Esophagus muscularis mucosa (tissue), 4 donors: ENCODE measurements at regions of chr1 and their contacts with region 1.

Region 1: DNA sequence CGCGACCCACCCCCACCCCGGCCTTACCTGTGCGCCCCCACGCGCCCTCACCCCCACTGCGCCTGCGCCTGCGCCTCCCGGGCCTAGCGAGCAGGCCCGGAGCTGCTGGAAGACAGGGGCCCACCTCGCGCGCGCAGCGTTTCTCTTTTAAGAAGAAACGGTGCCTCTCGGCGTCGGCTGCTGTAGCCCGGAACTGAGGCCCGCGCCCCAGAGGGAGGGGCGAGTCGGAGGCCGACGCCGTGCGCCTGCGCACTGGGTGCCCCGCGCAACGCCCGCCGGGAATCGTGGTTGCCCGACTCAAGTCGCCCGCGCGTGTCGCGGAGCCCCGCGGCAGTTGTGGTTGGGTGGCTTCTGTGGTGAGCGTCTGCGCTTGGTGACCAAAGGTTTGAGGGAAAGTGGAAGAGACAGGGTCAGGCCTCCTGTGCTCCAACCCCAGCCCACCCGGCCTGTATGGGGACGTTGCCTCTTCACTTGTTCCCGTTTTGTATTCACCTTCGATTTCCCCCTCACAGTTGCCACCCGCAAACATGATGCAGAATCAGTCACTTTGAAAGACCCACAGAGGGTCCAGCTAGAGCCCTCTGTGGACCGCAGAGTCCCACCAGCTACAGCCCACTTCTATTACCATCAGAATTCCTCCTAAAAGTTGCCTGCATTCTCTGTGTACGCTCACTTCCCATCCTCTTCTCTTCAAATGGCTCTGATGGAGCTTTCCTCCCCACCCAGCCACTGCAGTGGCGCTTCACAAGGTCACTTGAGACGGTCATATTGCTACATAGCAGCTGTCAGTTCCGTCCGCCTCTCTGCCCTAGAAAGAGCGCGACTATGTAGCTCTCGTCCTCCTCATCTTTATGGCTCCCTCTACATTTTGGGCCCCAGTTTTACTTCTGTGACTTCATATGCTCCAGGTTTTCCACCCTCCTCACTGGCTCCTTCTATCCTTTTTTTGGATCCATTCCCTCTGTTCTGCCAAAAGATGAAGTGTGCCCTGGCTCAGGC is at the start of gene ZNF692:
- DNase-seq: peak; percentile 99
- H3K4me3 ChIP-seq: peak within 1 kb of the TSS; percentile 61 to 71 (median 64)
- H3K27ac ChIP-seq: peak within 1 kb of the TSS; percentile 87 to 95 (median 94)
- H3K4me1 ChIP-seq: peaks cover 37 to 44% (median 43%) of the 10 kb centered on the region in 4 donors
- H3K27me3 ChIP-seq: no peaks in the 10 kb centered on the region
- CTCF ChIP-seq: peak in 1 of 3 experiments; percentile 5
- EP300 ChIP-seq: no peak
- POLR2A ChIP-seq: peak; percentile 83
- total RNA-seq, gene ZNF692: 19.4 to 37.3 (median 30.5) TPM

Region 2: GRCh38 chr1:248807067-248807737 is 52.0 kb before region 1 on chr1:
- intact Hi-C with region 1: no loop called
- DNase-seq: no peak
- H3K4me3 ChIP-seq: no peak overlapping the region
- H3K27ac ChIP-seq: no peak overlapping the region
- H3K4me1 ChIP-seq: peaks cover 11 to 35% (median 26%) of the 10 kb centered on the region in 4 donors
- H3K27me3 ChIP-seq: peaks cover 0 to 5% (median 0%) of the 10 kb centered on the region in 4 donors
- CTCF ChIP-seq: peak; percentile 58 to 82 (median 64)
- EP300 ChIP-seq: no peak
- POLR2A ChIP-seq: no peak

Region 3: DNA sequence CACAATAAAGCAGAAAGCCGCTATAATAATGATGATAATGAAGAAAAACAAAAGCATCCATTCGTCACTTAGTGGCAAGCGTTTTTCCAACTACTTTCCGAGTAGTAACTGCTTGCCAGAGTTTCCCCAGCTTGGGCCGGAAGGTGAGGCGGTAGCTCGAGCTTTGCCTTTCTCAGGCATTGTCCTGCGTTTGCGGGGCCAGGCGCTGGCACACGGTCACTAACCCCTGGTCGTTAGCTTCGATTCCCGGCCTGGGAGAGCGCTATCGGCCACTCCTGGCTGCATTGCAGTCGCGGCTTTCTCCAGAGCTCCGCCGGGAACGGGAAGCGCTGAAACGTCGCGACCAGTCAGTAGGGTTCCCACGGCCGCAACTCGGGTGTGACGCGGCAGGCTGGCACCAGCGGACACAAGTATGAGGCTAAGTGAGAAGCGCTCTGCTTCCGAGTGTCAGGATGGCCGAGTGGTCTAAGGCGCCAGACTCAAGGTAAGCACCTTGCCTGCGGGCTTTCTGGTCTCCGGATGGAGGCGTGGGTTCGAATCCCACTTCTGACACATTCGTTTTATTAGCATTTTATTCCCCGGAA is 14.3 kb after region 1 on chr1:
- intact Hi-C with region 1: loop called (anchors 2 kb)
- DNase-seq: peak; percentile 99
- H3K4me3 ChIP-seq: peak overlapping the region; percentile 69 to 83 (median 74)
- H3K27ac ChIP-seq: peak overlapping the region; percentile 94 to 99 (median 98)
- H3K4me1 ChIP-seq: peaks cover 9 to 21% (median 15%) of the 10 kb centered on the region in 4 donors
- H3K27me3 ChIP-seq: no peaks in the 10 kb centered on the region
- CTCF ChIP-seq: no peak
- EP300 ChIP-seq: no peak
- POLR2A ChIP-seq: no peak